Left ventricle myocardium superior (tissue), 1 donor: ENCODE measurements at regions of chr6 and their contacts with region 1.

Region 1: DNA sequence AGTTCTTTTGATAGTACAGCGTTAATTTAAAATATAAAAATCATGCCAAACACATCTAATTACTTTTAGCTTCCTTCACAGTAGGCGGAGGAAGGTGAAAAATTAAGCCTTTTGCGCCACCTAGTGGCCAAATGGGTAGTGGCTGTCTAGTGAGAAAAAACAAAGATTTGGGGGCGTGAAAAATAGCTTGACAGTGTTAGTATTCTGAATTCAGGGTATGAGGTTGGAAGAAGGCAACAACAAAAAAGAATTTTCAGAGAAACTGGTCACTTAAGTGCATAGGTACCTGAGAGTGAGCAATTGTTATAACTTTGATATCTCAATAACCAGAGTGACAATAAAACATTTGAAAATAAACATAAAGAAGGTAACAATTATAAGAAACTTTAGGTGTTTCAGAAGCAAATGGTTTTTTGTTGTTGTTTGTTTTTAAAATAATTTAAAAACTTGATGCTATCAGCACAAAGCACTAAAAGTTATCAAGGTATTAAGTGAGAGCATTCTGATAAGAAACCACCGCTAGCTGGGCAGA is 14.3 kb downstream of the PSMB9 start:
- DNase-seq: peak; percentile 82
- ATAC-seq: peak; percentile 72

Region 2: DNA sequence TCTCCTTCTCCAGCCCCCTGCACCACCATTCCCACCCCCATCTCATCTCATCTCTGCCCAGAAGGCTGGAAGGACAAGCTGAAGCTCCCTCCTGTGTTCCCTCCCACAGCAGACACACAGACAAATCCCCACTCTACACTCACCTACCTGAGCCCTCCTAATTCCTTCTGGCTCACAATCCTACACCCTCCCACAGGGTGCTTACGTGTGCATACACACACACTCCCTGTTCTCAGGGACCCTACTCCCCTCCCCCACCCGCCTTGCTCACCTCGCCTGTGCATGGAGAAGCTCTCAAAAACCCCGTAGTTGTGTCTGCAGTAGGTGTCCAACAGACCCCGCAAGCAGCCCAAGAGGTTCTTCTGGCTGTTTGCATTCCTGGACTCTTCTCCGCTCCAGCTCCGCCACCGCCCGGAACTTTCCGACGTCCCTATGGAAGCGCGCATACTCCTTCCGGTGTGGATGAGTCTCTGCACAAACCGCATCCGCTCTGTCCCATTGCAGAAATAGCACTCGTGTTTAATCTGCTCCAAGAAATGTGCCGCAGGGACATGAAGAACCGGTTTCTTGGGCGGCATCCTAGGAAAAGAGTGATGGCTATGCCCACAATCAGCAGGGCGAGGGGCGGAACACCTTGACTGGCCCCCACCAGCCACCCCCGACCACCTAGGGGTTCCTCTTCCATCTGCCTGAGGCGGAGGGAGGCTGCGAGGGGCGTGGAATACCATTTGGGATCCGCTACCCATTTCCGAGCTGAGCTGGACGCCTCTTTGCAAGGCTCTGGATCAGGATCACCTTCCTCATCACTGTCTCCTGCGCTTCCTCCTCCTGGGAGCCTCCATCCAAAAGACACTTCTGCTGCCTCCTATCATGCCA is 408.5 kb before region 1 on chr6:
- intact Hi-C with region 1: no loop called
- DNase-seq: no peak
- ATAC-seq: no peak

Region 3: DNA sequence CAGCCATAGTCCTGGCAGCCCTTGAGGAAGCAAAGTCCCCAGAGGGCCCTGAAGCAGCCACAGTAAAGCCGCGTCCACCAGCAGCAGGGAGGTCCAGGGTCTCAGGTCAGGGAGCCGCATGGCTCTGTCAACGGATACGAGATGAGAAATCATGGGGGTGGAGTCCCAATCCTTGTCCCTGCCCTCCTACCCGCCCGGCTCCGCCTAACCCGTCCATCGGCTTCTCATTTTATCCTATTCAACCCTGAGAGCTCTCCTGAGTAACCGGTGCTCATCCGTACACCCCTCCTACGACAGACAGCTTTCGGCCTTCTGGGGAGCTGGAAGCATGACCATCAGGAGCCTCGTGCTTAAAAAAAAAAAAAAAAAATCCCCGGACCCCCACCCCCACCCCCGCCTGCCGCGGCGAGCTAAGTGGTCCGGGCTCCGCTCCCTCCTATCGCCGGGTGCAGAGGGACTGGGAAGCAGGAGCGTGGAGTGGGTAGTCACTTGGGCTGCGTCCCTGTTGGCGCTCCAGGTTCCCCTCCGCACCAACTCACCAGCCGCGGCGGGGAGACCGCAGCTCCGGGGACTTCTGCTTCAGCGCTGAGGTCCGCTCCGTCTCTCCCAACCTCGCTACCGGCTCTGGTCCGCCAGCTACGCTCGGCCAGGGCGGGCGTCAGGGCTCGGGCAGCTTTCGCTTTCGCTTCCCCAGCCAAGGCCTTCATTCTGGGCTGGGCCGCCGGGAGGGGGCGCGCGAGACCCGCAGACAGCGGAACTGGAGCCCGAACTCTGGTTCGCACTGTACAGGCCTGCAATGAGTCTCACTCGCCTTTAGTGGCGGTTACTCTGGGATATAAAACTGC is 30.0 kb before region 1 on chr6 and contains the start of gene TAP2:
- intact Hi-C with region 1: loop called (anchors 5 kb)
- DNase-seq: peak; percentile 98
- ATAC-seq: peak; percentile 97
- total RNA-seq, gene TAP2: 20.8 TPM